K562 (cell line): ENCODE measurements at regions of chr9 and their contacts with region 1.

Region 1: DNA sequence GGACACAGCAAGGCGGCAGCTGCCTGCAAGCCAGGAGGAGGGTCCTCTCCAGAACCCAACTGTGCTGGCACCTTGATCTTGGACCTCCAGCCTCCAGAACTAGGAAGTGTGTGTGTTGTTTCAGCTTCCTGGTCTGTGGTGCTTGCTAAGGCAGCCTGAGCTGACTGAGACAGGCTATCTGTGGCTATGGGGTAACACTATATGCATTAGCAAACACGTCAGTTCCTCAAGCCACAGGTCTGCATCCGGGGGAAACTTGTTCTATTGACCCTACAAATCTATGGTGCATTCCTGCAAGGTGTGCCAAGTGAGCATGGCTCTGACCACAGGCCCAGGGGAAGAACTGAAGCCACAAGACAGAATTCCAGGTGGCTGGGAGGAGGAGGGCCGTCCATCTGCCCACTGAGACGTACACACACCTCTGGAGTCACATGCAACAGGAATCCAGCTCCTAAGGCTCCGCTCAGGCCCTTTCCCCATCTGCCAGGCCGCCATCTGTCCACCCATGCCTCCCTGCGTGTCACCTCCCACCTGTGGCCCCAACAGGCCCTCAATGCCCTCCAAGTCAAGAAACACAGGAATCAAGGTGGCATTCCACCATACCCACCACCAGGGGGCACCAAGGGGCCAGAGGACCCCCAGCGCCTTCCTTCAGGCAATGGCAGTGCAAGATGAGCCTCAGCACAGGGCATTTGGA is 174.9 kb downstream of the ROR2 start:
- DNase-seq: peak; percentile 74 to 79 (median 77)
- ATAC-seq: peak; percentile 91
- H3K4me3 ChIP-seq: no peak overlapping the region
- H3K27ac ChIP-seq: no peak overlapping the region
- H3K4me1 ChIP-seq: peaks cover 5 to 6% of the 10 kb centered on the region in 2 experiments; a peak in 4 of 5 replicates
- H3K27me3 ChIP-seq: no peaks in the 10 kb centered on the region
- CTCF ChIP-seq: peak; percentile 76 to 87 (median 81)
- EP300 ChIP-seq: no peak
- POLR2A ChIP-seq: no peak
- RAD21 ChIP-seq: peak; percentile 86 to 90

Region 2: DNA sequence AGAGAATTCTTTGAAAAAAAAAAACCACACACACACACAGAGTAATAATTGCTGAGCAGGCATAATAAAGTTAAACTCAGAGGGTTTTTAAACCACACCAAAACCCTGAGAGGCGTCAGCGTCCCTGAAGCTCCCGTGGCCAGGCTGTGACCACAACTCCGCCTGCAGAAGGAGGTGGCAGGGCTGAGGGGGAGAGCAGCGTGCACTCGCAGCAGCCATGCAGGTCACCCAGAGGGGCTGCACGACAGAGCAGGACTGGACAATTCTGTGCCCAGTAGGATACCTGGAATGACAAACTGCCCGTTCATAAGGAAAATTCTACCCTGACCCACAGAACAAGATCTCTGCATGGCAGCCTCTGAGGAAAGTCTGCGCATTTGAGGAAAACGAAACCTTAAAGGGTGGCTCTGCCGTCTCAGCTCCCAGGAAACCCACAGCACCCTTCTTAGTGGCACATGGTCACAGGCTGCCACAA is 130.9 kb after region 1 on chr9:
- CTCF ChIA-PET with region 1: no interaction called
- POLR2A ChIA-PET with region 1: no interaction called
- in situ Hi-C with region 1: no loop called
- intact Hi-C with region 1: loop called (anchors 10 kb)
- DNase-seq: peak; percentile 54 to 81 (median 64)
- ATAC-seq: peak; percentile 80
- H3K4me3 ChIP-seq: peak overlapping the region; percentile 37
- H3K27ac ChIP-seq: peak overlapping the region; percentile 88
- H3K4me1 ChIP-seq: peaks cover 56 to 67% of the 10 kb centered on the region in 2 experiments
- H3K27me3 ChIP-seq: no peaks in the 10 kb centered on the region
- CTCF ChIP-seq: no peak
- EP300 ChIP-seq: no peak
- POLR2A ChIP-seq: peak; percentile 44; the same call in 1 of the 2 replicates
- RAD21 ChIP-seq: no peak